ENCODE measurements at regions of chr5 and their contacts with region 1.

Region 1: GRCh38 chr5:150398722-150399523 is 13.8 kb downstream of the CD74 start:
- DNase-seq: peak; percentile 94
- ATAC-seq: peak; percentile 67
- H3K4me3 ChIP-seq: no peak overlapping the region
- H3K4me3 Mint-ChIP-seq: peak overlapping the region; percentile 27
- H3K27ac ChIP-seq: peak overlapping the region; percentile 54 to 63
- H3K27ac Mint-ChIP-seq: peak overlapping the region; percentile 88
- H3K4me1 ChIP-seq: peaks cover 3 to 33% of the 10 kb centered on the region in 2 donors
- H3K4me1 Mint-ChIP-seq: peaks cover 49% of the 10 kb centered on the region
- H3K27me3 ChIP-seq: no peaks in the 10 kb centered on the region
- H3K27me3 Mint-ChIP-seq: no peaks in the 10 kb centered on the region
- CTCF ChIP-seq: peak; percentile 83

Region 2: GRCh38 chr5:150386024-150386864 is 12.7 kb before region 1 on chr5:
- CTCF ChIA-PET with region 1: interaction called, 9 read pairs
- POLR2A ChIA-PET with region 1: interaction called, 13 read pairs
- intact Hi-C with region 1: no loop called
- DNase-seq: peak; percentile 49
- ATAC-seq: no peak
- H3K4me3 ChIP-seq: no peak overlapping the region
- H3K4me3 Mint-ChIP-seq: no peak overlapping the region
- H3K27ac ChIP-seq: no peak overlapping the region
- H3K27ac Mint-ChIP-seq: no peak overlapping the region
- H3K4me1 ChIP-seq: no peaks in the 10 kb centered on the region
- H3K4me1 Mint-ChIP-seq: no peaks in the 10 kb centered on the region
- H3K27me3 ChIP-seq: no peaks in the 10 kb centered on the region
- H3K27me3 Mint-ChIP-seq: no peaks in the 10 kb centered on the region
- CTCF ChIP-seq: no peak

Region 3: DNA sequence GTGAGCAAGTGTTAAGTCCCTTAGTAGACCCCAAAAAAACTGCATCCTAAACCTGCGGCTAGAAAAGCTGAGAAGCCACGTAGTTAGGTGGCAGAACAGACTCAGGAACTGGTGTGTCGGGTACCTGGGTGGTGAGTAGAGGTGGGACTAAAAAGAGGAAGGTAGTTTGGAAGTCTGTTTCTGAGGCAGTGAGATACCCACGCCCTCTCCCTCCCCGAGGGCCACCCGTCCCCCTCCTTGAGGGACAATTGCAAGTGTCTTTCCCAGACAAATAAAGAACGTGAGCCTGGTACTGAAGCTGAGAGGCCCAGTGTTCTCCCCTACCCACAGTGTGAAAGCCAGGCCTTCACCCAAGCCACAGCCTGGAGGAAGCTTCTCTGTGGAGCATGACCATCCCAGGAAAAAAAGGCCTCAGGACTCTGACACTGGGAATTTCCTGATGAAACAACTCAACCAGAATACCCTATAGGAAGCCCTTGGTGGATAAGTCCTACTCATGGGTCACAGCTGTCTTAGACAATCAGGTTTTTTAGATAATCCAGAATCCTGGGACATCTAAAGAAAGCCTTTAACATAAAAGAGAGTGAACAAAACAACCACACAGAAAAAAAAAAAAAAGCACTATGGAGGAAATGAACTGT is 20.8 kb after region 1 on chr5:
- CTCF ChIA-PET with region 1: interaction called, 14 read pairs
- POLR2A ChIA-PET with region 1: interaction called, 286 read pairs
- intact Hi-C with region 1: no loop called
- DNase-seq: peak; percentile 87
- ATAC-seq: peak; percentile 99
- H3K4me3 ChIP-seq: peak overlapping the region in 4 of 5 experiments; percentile 16 to 46 (median 33)
- H3K4me3 Mint-ChIP-seq: peak overlapping the region; percentile 81
- H3K27ac ChIP-seq: peak overlapping the region; percentile 86 to 88
- H3K27ac Mint-ChIP-seq: peak overlapping the region; percentile 100
- H3K4me1 ChIP-seq: peaks cover 67 to 72% of the 10 kb centered on the region in 2 donors
- H3K4me1 Mint-ChIP-seq: peaks cover 59% of the 10 kb centered on the region
- H3K27me3 ChIP-seq: no peaks in the 10 kb centered on the region
- H3K27me3 Mint-ChIP-seq: no peaks in the 10 kb centered on the region
- CTCF ChIP-seq: no peak

Measured in B cell (primary cell).